A549 (cell line): ENCODE measurements at regions of chr12 and their contacts with region 1.

Region 1: DNA sequence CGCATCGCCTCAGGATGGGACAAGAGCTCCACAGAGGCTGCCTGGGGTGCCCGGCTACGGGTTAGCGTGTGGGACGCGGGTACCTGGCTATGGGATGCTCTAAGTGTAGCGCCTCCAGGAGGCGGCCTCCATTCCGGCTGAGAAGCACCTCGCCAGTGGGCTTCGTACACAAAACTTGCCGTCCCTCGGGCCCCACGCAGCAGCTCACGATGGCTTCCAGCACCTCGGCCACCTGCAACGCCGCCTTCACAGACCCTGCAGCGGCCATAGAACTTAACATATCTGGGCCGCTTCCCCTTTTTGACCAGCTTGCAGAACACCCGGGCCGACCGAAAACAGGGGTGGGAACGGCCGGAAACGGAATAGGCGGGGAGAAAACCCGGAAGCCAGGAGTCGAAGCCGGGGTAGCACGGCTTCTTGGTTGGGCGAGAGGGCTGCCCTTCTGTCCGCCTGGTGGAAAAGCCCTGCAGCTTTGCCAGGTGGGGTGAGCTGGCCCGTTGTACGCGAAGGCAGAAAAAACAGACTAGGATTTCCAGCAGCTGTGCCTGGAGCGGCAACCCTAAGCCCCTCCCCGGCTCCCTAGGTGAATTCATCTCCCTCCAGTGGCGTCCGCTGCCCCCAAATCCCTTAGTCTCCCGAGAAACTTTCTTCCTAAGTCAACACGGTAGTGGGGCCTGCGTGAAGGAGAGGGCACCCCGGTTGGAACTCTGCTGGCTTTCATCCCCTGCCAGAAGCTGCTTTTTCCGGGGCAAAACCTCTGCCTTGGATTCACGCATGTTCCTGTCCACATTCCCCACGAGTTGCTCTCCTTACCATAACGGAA is at the start of gene BBS10:
- DNase-seq: peak; percentile 86 to 92
- ATAC-seq: peak; percentile 99
- H3K4me3 ChIP-seq: peak within 1 kb of the TSS; percentile 67
- H3K27ac ChIP-seq: peak within 1 kb of the TSS; percentile 90 to 97
- H3K4me1 ChIP-seq: peaks cover 15% of the 10 kb centered on the region; the same call in 2 of the 3 replicates
- CTCF ChIP-seq: peak; percentile 64
- EP300 ChIP-seq: no peak
- POLR2A ChIP-seq: peak; percentile 87
- RAD21 ChIP-seq: peak; percentile 33 to 50
- polyA plus RNA-seq, gene BBS10: 11.6 and 15.1 TPM in 2 replicates

Region 2: GRCh38 chr12:76083904-76084862 is 264.1 kb before region 1 on chr12 and contains the start of gene NAP1L1:
- CTCF ChIA-PET with region 1: interaction called, 10 read pairs
- POLR2A ChIA-PET with region 1: interaction called, 10 read pairs
- DNase-seq: peak; percentile 95 to 99
- ATAC-seq: peak; percentile 92
- H3K4me3 ChIP-seq: peak within 1 kb of the TSS; percentile 81
- H3K27ac ChIP-seq: peak within 1 kb of the TSS; percentile 90 to 99
- H3K4me1 ChIP-seq: peaks cover 36% of the 10 kb centered on the region
- CTCF ChIP-seq: no peak
- EP300 ChIP-seq: no peak
- POLR2A ChIP-seq: peak; percentile 95
- RAD21 ChIP-seq: no peak
- polyA plus RNA-seq, gene NAP1L1: 640 and 943 TPM in 2 replicates

Region 3: DNA sequence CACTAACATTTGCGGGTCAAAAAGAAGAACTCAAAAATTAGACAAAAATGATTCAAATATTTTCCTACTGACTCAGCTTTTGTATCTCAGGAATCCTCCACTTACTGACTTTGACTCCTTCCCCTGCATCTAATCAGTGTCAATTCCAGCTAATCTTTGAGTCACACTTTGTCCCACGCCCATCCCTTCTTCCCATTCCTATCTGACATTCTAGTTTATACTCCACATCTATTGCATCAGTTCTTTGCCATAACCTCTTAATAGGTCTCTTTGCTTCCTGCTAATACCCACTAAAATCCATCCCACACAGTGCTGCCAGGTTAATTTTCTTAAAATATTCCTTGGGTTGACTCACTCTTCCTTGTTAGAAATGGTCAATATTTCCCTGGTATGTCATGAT is 19.1 kb before region 1 on chr12:
- CTCF ChIA-PET with region 1: interaction called, 14 read pairs
- POLR2A ChIA-PET with region 1: no interaction called
- DNase-seq: peak; percentile 21 to 28
- ATAC-seq: peak; percentile 40 to 54; a peak in 4 of 6 replicates
- H3K4me3 ChIP-seq: no peak overlapping the region
- H3K27ac ChIP-seq: no peak overlapping the region; a peak in 1 of 6 replicates
- H3K4me1 ChIP-seq: 0 out of 3 replicates have a peak, but pooled peaks cover 6% of the 10 kb centered on the region
- CTCF ChIP-seq: no peak
- EP300 ChIP-seq: no peak
- POLR2A ChIP-seq: no peak
- RAD21 ChIP-seq: no peak

Region 4: DNA sequence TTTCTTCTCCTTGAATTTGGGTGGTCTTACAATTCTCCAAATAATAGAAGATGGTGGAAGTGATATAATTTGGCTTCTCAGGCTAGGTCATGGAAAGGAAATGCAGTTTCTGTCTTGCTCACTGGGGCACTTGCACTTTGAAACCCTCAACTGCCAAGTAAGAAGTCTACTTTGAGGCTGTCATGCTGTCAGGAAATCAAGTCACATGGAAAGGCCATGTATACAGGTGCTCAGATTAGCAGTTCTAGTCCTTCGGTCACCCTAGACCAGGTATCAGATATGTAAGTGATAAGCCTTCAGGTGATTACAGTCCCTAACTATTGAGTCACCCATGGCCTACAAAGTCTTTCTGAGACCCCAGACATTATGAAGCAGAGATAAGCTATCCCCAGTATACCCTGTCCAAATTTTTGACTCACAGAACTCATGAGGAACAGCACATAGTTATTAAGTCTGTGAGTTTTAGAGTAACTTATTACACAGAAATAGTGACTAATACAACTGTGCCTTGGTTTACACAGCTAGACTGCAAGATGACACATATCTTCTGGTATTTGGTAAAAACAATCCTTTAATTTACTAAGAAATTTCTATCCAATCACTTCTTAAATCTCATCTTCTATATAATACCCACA is 26.2 kb after region 1 on chr12:
- CTCF ChIA-PET with region 1: interaction called, 12 read pairs
- POLR2A ChIA-PET with region 1: no interaction called
- DNase-seq: peak in 1 of 2 experiments; percentile 5
- ATAC-seq: peak; percentile 19 to 67; a peak in 3 of 6 replicates
- H3K4me3 ChIP-seq: no peak overlapping the region
- H3K27ac ChIP-seq: peak overlapping the region; percentile 66 to 70
- H3K4me1 ChIP-seq: peaks cover 34% of the 10 kb centered on the region
- CTCF ChIP-seq: no peak
- EP300 ChIP-seq: no peak
- POLR2A ChIP-seq: no peak
- RAD21 ChIP-seq: no peak